Activated T-helper 1 cell treated with anti-CD3 and anti-CD28 coated beads, Interleukin-12 subunit alpha, Interleukin-12 subunit beta, Interleukin-2, Interleukin-4 antibody, amounts not matched to agents 30 ng/mL and 10 ng/mL and 1 ng/mL, durations not matched to agents 14 hours and 24 hours and 36 hours (primary cell): ENCODE measurements at regions of chr12 and their contacts with region 1.

Region 1: DNA sequence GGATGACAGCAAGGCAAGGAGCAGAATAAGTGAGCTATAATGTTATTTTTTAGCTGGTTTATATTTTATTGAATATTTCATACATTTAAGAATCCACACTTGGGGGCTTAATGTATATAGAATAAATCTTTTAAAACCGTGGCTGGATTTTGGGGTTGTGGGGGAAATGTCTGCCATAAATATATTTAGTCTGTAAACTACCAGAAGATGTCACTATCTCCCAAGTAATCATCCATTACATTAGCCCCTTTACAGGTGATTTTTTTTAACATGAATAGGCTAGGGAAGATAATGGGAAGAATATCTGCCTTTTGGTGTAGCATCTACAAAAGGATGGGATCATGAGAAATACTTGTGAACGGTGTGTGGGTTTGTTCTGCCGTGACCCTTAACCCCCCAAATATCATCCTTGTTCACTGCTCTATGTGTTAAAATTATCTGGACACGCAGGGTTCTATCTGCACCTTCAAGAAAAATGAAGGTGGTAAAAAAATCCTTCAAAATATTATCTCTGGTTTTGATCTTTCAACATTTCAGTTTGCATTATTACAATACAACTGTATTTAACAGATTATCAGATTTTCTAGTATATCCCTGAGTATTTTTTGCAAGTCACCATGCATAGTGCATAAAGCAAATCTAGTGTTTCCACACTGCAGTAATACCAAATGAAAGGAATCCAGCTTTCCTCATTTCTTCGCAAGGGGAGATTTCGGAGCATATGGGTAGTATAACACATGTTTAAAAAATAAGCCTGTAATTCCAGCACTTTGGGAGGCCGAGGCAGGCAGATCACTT is 8.0 kb upstream of the SLC17A8 start:
- DNase-seq: no peak
- H3K4me3 Mint-ChIP-seq: no peak overlapping the region
- H3K27ac Mint-ChIP-seq: no peak overlapping the region
- H3K4me1 Mint-ChIP-seq: no peaks in the 10 kb centered on the region
- H3K27me3 Mint-ChIP-seq: peaks cover 16% of the 10 kb centered on the region

Region 2: DNA sequence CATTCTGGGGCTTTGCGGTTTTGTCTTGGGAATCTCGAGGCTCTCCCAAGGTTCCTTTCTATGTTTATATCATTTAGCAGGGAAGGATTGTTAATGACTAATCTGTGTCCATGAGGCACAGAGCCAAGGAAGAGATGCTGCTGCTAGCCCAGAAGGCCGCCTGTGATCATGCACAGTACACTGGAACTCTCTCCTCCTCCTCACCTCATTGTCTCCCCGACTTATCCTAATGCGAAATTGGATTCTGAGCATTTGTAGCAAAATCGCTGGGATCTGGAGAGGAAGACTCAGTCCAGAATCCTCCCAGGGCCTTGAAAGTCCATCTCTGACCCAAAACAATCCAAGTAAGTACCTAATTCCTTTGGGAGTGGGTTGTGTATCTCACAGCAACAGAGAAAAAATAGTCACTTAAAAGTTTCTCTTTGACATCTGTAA is 124.9 kb after region 1 on chr12 and contains the start of gene NR1H4:
- intact Hi-C with region 1: no loop called
- DNase-seq: no peak
- H3K4me3 Mint-ChIP-seq: no peak within 1 kb of the TSS
- H3K27ac Mint-ChIP-seq: no peak within 1 kb of the TSS
- H3K4me1 Mint-ChIP-seq: no peaks in the 10 kb centered on the region
- H3K27me3 Mint-ChIP-seq: no peaks in the 10 kb centered on the region
- total RNA-seq, gene NR1H4: not detected in 2 replicates

Region 3: DNA sequence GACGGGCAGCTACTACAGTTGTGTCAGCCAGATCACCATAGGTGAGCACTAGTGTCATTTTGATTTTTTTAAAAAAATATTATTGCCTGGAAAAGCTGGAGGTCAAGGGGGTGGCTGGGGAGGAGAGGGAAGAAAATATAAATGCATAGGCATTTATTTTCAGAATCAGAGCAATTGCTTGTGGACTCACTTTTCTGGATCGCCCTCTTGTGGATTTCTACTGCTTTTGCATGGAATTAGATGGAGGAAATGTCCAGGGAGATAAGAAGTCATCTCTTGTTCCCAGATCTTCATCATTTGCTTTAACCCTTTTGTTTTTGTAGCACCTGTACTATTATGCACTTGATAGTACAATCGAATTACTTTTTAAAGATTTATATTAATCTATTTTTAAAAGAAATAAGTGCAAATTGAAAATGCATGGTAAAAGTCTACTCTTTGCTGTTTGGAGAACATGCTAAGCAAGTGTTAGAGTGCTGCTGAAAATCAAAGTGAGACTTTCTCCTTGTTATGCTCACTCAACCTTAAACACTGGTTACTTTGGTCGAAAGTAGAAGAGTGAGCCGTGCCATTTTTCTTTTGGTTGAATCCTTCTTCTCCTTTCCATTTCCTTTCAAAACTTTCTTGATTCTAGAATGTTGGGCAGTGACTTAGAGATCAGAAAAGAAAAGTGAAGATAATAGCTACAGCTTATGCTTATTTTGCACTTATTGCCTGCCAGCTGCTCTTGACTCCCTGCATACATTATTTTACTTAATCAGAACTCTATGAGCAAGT is 385.1 kb after region 1 on chr12:
- intact Hi-C with region 1: loop called (anchors 10 kb)
- DNase-seq: no peak
- H3K4me3 Mint-ChIP-seq: no peak overlapping the region
- H3K27ac Mint-ChIP-seq: no peak overlapping the region
- H3K4me1 Mint-ChIP-seq: no peaks in the 10 kb centered on the region
- H3K27me3 Mint-ChIP-seq: no peaks in the 10 kb centered on the region